ENCODE measurements at regions of chr2 and their contacts with region 1.

Region 1: DNA sequence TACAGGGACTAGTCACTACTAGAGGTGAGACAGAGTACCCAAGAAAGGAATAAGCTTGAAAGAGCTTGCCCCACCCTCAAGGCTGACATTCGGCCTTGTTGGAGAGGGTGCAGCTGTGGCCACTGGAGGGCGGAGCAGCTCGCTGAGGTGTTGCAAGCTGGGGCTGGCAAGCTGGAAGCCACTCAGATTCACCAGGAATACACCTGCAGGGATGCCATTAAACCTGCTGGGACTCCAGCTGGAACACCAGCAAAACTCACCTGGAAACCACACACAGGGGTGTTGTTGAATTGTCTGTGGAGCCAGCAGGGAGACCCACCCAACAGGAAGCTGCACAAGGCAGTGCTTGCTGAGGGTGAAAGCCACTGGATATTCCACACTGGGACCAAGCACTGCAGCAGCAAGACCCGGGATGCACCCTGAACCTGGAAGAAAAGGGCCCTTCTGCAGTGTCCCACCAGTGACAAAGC is 26.1 kb downstream of the KCTD18 start:
- DNase-seq: peak in 1 of 2 donors; percentile 15
- ATAC-seq: no peak
- H3K4me3 ChIP-seq: no peak overlapping the region
- H3K4me3 Mint-ChIP-seq: no peak overlapping the region
- H3K27ac ChIP-seq: no peak overlapping the region
- H3K27ac Mint-ChIP-seq: no peak overlapping the region
- H3K4me1 ChIP-seq: no peaks in the 10 kb centered on the region
- H3K4me1 Mint-ChIP-seq: no peaks in the 10 kb centered on the region
- H3K27me3 ChIP-seq: no peaks in the 10 kb centered on the region
- H3K27me3 Mint-ChIP-seq: no peaks in the 10 kb centered on the region
- CTCF ChIP-seq: no peak

Region 2: DNA sequence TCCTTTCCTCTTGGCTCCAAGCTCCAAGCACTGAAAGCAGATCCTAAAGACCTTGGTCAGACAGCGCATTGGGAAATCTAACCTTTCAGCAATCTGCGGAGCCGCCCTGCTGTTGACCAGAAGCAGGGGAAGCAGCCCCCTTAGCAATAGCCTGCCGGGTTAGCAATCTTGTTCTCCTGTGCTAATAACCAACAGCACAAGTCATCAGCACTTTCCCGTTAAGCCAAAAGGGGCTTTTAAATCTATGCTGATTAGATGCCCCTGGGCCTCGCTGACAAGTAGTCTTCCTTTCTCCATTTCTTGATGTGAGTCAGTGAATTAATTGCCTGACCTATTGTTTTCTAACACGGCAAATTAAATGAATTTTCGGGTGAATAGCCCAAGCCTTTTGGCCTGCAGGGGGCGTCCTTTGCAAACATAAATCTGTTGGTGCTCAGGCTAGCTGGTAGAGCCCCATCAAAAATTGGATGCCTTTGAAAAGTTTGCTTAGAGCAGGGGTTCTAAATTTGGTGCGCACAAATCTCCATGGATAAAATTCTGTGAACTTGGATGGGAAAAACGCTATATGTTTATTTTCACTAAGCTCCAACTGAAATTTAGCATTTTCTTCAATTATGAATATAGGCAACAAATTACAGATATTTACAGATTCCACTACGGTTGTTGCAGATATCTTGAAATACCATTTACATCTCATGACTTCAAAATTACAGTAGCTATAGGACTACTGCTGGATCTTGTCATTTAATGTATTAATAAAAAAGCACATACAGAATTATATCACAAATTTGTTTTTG is 503.7 kb before region 1 on chr2:
- intact Hi-C with region 1: loop called (anchors 1 kb)
- DNase-seq: peak; percentile 70 to 85
- ATAC-seq: peak; percentile 70 to 80 (median 75)
- H3K4me3 ChIP-seq: no peak overlapping the region
- H3K4me3 Mint-ChIP-seq: no peak overlapping the region
- H3K27ac ChIP-seq: no peak overlapping the region
- H3K27ac Mint-ChIP-seq: no peak overlapping the region
- H3K4me1 ChIP-seq: no peaks in the 10 kb centered on the region
- H3K4me1 Mint-ChIP-seq: peaks cover 6% of the 10 kb centered on the region in 2 donors
- H3K27me3 ChIP-seq: no peaks in the 10 kb centered on the region
- H3K27me3 Mint-ChIP-seq: peaks cover 0 to 4% of the 10 kb centered on the region in 2 donors
- CTCF ChIP-seq: peak; percentile 84

Measured in natural killer cell (primary cell).